CD8-positive, alpha-beta T cell (primary cell): ENCODE measurements at regions of chr11 and their contacts with region 1.

Region 1: DNA sequence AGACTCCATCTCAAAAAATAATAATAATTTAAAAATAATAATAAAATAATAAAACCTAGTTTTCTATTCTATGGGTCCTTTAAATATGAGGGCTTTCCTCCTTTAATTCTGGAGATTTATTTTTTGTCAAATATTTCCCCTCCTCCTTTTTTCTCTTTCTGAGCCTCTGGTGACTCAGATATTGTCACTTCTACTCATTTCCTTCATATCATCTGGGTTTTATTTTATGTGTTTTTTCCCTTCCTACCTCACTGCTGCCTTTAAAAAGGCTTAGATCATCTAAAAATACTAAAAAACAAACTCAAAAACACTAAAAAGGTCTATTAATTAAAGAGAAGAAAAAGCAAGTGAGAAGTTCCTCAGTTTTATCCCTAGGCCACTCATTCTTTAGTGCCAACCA is 138.9 kb downstream of the SPON1 start:
- DNase-seq: no peak
- ATAC-seq: no peak
- H3K4me3 ChIP-seq: no peak overlapping the region
- H3K4me3 Mint-ChIP-seq: no peak overlapping the region
- H3K27ac ChIP-seq: no peak overlapping the region
- H3K27ac Mint-ChIP-seq: no peak overlapping the region
- H3K4me1 ChIP-seq: no peaks in the 10 kb centered on the region
- H3K4me1 Mint-ChIP-seq: peaks cover 5% of the 10 kb centered on the region
- H3K27me3 ChIP-seq: no peaks in the 10 kb centered on the region
- H3K27me3 Mint-ChIP-seq: no peaks in the 10 kb centered on the region
- CTCF ChIP-seq: no peak

Region 2: DNA sequence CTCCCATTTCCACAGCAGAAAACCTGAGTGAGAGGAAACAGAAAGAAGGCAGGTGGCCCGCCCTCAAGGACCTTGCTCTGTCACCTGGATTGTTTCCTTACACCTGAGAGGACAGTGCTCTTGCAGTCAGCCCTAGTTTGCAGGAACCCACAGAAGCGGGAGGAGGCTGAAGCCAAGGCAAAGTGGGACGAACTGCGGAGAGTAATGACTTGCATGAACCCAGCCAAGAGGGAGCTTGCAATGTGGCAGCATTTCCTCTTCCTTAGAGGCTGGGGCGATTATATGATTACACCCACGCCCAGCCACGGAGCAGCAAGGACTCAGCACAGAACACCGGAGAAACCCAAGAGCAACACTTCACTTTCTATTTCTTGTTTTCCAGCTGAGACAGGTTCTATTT is 36.2 kb before region 1 on chr11:
- CTCF ChIA-PET with region 1: no interaction called
- POLR2A ChIA-PET with region 1: no interaction called
- intact Hi-C with region 1: loop called in 1 of 2 experiments (anchors 5 kb)
- DNase-seq: peak in 1 of 9 experiments; percentile 16
- ATAC-seq: no peak
- H3K4me3 ChIP-seq: peak overlapping the region in 1 of 2 experiments; percentile 35
- H3K4me3 Mint-ChIP-seq: peak overlapping the region; percentile 32
- H3K27ac ChIP-seq: no peak overlapping the region
- H3K27ac Mint-ChIP-seq: peak overlapping the region; percentile 33
- H3K4me1 ChIP-seq: peaks cover 13% of the 10 kb centered on the region
- H3K4me1 Mint-ChIP-seq: peaks cover 17% of the 10 kb centered on the region
- H3K27me3 ChIP-seq: no peaks in the 10 kb centered on the region
- H3K27me3 Mint-ChIP-seq: no peaks in the 10 kb centered on the region
- CTCF ChIP-seq: no peak

Region 3: GRCh38 chr11:14237444-14237961 is 136.1 kb after region 1 on chr11:
- CTCF ChIA-PET with region 1: no interaction called
- POLR2A ChIA-PET with region 1: no interaction called
- intact Hi-C with region 1: no loop called
- DNase-seq: peak in 1 of 9 experiments; percentile 30
- ATAC-seq: peak; percentile 46
- H3K4me3 ChIP-seq: no peak overlapping the region
- H3K4me3 Mint-ChIP-seq: no peak overlapping the region
- H3K27ac ChIP-seq: no peak overlapping the region
- H3K27ac Mint-ChIP-seq: no peak overlapping the region
- H3K4me1 ChIP-seq: no peaks in the 10 kb centered on the region
- H3K4me1 Mint-ChIP-seq: peaks cover 5% of the 10 kb centered on the region
- H3K27me3 ChIP-seq: no peaks in the 10 kb centered on the region
- H3K27me3 Mint-ChIP-seq: no peaks in the 10 kb centered on the region
- CTCF ChIP-seq: no peak

Region 4: GRCh38 chr11:14358729-14359439 is 257.5 kb after region 1 on chr11 and contains the start of gene RRAS2:
- CTCF ChIA-PET with region 1: no interaction called
- POLR2A ChIA-PET with region 1: no interaction called
- intact Hi-C with region 1: no loop called
- DNase-seq: peak; percentile 58 to 90 (median 80)
- ATAC-seq: peak; percentile 94
- H3K4me3 ChIP-seq: peak within 1 kb of the TSS; percentile 66 to 70
- H3K4me3 Mint-ChIP-seq: peak within 1 kb of the TSS; percentile 88
- H3K27ac ChIP-seq: peak within 1 kb of the TSS; percentile 19 to 64
- H3K27ac Mint-ChIP-seq: peak within 1 kb of the TSS; percentile 83
- H3K4me1 ChIP-seq: peaks cover 17% of the 10 kb centered on the region
- H3K4me1 Mint-ChIP-seq: peaks cover 35% of the 10 kb centered on the region
- H3K27me3 ChIP-seq: no peaks in the 10 kb centered on the region
- H3K27me3 Mint-ChIP-seq: no peaks in the 10 kb centered on the region
- CTCF ChIP-seq: no peak
- total RNA-seq, gene RRAS2: 38.5 to 40.6 TPM